Psoas muscle (tissue), 8 donors: ENCODE measurements at regions of chr12 and their contacts with region 1.

Region 1: GRCh38 chr12:12645485-12645884 is 33.8 kb downstream of the CREBL2 start:
- DNase-seq: no peak
- ATAC-seq: peak in 2 of 4 donors; percentile 50 to 78
- H3K4me3 ChIP-seq: no peak overlapping the region
- H3K27ac ChIP-seq: no peak overlapping the region
- H3K4me1 ChIP-seq: no peaks in the 10 kb centered on the region
- H3K27me3 ChIP-seq: no peaks in the 10 kb centered on the region
- CTCF ChIP-seq: peak; percentile 40

Region 2: GRCh38 chr12:12577786-12578185 is 67.7 kb before region 1 on chr12:
- intact Hi-C with region 1: no loop called
- DNase-seq: no peak
- ATAC-seq: no peak
- H3K4me3 ChIP-seq: no peak overlapping the region
- H3K27ac ChIP-seq: no peak overlapping the region
- H3K4me1 ChIP-seq: no peaks in the 10 kb centered on the region
- H3K27me3 ChIP-seq: no peaks in the 10 kb centered on the region
- CTCF ChIP-seq: no peak

Region 3: GRCh38 chr12:12704593-12705230 is 59.2 kb after region 1 on chr12:
- intact Hi-C with region 1: loop called in 1 of 2 experiments (anchors 5 kb)
- DNase-seq: peak in 1 of 2 donors; percentile 64
- ATAC-seq: peak; percentile 99 to 100 (median 100)
- H3K4me3 ChIP-seq: no peak overlapping the region
- H3K27ac ChIP-seq: no peak overlapping the region
- H3K4me1 ChIP-seq: no peaks in the 10 kb centered on the region
- H3K27me3 ChIP-seq: no peaks in the 10 kb centered on the region
- CTCF ChIP-seq: peak; percentile 88

Region 4: GRCh38 chr12:12916135-12916944 is 270.9 kb after region 1 on chr12:
- intact Hi-C with region 1: no loop called
- DNase-seq: peak; percentile 81 to 89
- ATAC-seq: peak; percentile 88 to 97 (median 90)
- H3K4me3 ChIP-seq: peak overlapping the region; percentile 8
- H3K27ac ChIP-seq: peak overlapping the region; percentile 30
- H3K4me1 ChIP-seq: no peaks in the 10 kb centered on the region
- H3K27me3 ChIP-seq: no peaks in the 10 kb centered on the region
- CTCF ChIP-seq: peak; percentile 99